Ascending aorta (tissue), 2 donors: ENCODE measurements at regions of chr1 and their contacts with region 1.

Region 1: GRCh38 chr1:156728597-156729462 is at the start of gene ISG20L2:
- DNase-seq: peak; percentile 90 to 99
- H3K4me3 ChIP-seq: peak within 1 kb of the TSS; percentile 82 to 84
- H3K27ac ChIP-seq: peak within 1 kb of the TSS; percentile 95 to 97
- H3K4me1 ChIP-seq: peaks cover 24 to 35% of the 10 kb centered on the region in 2 donors
- H3K27me3 ChIP-seq: no peaks in the 10 kb centered on the region
- CTCF ChIP-seq: no peak
- total RNA-seq, gene ISG20L2: 7.8 TPM

Region 2: GRCh38 chr1:156338180-156338973 is 390.5 kb before region 1 on chr1 and contains the starts of genes CCT3 and TSACC:
- intact Hi-C with region 1: loop called (anchors 2 kb)
- DNase-seq: peak; percentile 99 to 100
- H3K4me3 ChIP-seq: peak within 1 kb of the TSS; percentile 79 to 83
- H3K27ac ChIP-seq: peak within 1 kb of the TSS; percentile 74 to 82
- H3K4me1 ChIP-seq: peaks cover 13% of the 10 kb centered on the region in 2 donors
- H3K27me3 ChIP-seq: no peaks in the 10 kb centered on the region
- CTCF ChIP-seq: no peak
- total RNA-seq, gene CCT3: 109 TPM
- total RNA-seq, gene TSACC: not detected

Region 3: DNA sequence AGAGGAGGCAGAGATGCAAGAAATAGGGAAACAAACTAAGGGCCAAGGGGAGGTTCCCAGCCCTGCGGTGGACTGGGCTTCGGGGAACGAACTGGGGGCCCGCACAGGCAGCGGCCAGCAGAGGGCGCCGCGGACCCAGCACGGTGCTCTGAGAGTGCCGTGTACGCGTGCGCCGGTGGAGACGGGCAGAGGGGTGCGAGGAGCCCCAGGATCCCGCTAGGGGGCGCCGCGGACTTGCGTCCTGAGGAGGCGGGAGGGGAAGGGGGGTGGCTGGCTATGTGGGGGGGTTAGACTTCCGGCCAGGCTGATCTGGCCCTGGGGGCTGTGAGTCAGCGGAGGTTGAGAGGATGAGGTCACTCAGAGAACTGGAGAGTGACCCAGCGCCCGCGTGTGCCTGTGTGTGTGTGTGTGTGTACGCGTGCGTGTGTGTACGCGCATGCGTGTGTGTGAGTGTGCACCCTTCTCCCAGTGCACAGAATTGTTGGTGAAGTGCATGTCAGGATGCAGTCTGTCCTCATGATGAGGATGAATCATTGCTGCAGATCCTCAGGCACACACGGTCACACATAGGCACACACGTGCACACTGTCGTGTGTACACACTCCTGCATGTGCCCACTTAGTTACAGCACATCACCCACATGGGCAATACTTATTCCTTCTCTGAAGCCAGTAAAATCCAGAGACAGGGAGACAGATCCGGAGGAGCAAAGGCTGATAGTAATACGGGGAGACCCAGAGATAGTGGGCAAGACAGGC is 68.7 kb before region 1 on chr1:
- intact Hi-C with region 1: loop called (anchors 1 kb)
- DNase-seq: peak; percentile 86 to 99
- H3K4me3 ChIP-seq: peak overlapping the region in 1 of 2 donors; percentile 27
- H3K27ac ChIP-seq: peak overlapping the region; percentile 88 to 90
- H3K4me1 ChIP-seq: peaks cover 50 to 66% of the 10 kb centered on the region in 2 donors
- H3K27me3 ChIP-seq: no peaks in the 10 kb centered on the region
- CTCF ChIP-seq: peak; percentile 99 to 100 (median 99)

Region 4: DNA sequence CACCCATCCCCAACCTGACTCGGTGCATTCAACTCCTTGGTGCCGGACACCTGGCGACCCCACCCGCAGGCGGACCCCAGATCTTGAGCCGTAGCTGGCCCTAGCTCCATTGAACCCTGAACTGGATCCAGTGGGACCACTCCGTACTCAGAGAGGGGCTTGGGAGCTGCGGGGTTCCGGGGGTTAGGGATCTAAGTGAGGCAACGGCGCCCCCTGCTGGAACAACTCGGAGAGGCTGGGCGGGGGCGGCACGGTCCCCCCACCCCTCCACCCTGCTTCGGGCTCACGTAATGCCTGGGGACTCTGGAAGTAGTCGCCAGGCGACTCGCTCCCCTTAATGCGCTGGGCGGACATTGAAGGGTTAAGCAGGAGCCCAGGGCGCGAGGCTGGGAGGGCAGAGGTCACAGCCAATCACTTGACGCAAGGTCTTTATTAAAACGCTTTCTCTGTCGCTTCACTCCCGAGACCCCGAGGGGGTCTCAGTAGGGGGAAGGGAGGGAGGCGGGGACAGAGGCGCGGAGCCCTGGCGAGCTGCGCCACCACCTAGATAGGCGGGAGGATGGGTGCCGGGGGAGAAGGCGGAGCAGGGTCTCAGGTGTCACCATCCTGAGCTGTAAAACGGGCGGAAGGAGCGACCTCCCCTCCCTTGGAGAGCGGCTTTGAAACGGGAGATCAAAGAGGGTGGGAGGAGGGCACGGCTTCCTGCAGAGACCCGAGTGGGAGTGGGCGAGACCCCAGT is 22.7 kb before region 1 on chr1:
- intact Hi-C with region 1: loop called (anchors 1 kb)
- DNase-seq: peak; percentile 19 to 85
- H3K4me3 ChIP-seq: peak overlapping the region; percentile 58 to 69
- H3K27ac ChIP-seq: peak overlapping the region; percentile 69 to 76
- H3K4me1 ChIP-seq: peaks cover 10 to 38% of the 10 kb centered on the region in 2 donors
- H3K27me3 ChIP-seq: no peaks in the 10 kb centered on the region
- CTCF ChIP-seq: peak; percentile 87 to 95 (median 91)

Region 5: DNA sequence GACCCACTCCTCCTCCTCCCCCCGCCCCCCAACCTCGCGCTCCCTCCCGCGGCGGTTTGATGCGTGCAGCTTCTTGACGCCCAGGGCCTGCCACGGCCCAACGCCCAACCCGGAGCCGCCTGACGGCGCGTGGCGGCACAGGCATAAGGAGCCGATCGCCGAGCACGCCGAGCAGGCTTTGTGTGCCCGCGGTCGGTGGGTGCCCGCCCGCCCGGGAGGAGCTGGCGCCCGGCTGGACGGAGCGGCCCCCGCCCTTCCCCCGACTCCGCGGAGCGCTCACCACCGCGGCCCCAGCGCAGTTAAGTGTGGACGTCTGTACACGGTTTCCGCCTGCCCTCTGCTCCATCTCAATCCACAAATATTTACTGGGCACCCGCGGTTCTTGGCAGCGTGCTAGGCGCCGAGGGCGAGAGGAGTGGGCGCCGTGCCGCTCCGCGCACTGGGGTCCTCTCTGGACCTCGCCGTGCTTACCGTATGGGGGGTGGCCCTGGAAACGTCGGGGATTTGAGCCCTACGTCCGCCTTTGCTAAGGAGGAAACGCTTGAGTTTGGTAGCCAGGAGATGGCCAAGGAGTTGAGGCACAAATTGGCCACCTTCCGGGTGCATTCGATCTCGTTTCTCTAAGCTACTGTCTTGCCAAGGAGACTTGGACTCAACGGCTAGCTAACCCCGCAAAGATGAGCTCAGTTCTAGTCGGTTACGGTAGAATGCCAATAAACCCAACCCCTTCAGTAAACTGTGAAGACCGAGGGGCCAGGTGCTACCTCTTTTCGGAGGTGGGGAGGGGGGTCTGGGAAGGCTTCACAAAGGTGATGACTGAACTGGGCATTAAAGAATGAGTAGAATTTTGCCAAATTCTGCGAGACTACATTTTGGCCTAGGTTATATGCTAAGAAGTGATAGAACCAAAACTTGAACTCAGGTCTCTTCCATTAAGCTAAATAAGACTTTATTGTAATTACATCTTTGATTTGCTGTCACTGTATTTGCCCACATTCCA is 23.2 kb after region 1 on chr1:
- intact Hi-C with region 1: loop called (anchors 1 kb)
- DNase-seq: peak; percentile 86 to 98
- H3K4me3 ChIP-seq: peak overlapping the region; percentile 73 to 91
- H3K27ac ChIP-seq: peak overlapping the region; percentile 87 to 89
- H3K4me1 ChIP-seq: peaks cover 10 to 28% of the 10 kb centered on the region in 2 donors
- H3K27me3 ChIP-seq: no peaks in the 10 kb centered on the region
- CTCF ChIP-seq: peak in 1 of 3 experiments; percentile 27

Region 6: GRCh38 chr1:156892190-156893047 is 163.6 kb after region 1 on chr1:
- intact Hi-C with region 1: loop called (anchors 2 kb)
- DNase-seq: peak; percentile 36 to 92
- H3K4me3 ChIP-seq: peak overlapping the region; percentile 31 to 70
- H3K27ac ChIP-seq: peak overlapping the region; percentile 92 to 94
- H3K4me1 ChIP-seq: peaks cover 6 to 16% of the 10 kb centered on the region in 2 donors
- H3K27me3 ChIP-seq: no peaks in the 10 kb centered on the region
- CTCF ChIP-seq: peak; percentile 75 to 84 (median 77)